Activated CD4-positive, alpha-beta T cell treated with anti-CD3 and anti-CD28 coated beads for 36 hours (primary cell): ENCODE measurements at regions of chr9 and their contacts with region 1.

Region 1: DNA sequence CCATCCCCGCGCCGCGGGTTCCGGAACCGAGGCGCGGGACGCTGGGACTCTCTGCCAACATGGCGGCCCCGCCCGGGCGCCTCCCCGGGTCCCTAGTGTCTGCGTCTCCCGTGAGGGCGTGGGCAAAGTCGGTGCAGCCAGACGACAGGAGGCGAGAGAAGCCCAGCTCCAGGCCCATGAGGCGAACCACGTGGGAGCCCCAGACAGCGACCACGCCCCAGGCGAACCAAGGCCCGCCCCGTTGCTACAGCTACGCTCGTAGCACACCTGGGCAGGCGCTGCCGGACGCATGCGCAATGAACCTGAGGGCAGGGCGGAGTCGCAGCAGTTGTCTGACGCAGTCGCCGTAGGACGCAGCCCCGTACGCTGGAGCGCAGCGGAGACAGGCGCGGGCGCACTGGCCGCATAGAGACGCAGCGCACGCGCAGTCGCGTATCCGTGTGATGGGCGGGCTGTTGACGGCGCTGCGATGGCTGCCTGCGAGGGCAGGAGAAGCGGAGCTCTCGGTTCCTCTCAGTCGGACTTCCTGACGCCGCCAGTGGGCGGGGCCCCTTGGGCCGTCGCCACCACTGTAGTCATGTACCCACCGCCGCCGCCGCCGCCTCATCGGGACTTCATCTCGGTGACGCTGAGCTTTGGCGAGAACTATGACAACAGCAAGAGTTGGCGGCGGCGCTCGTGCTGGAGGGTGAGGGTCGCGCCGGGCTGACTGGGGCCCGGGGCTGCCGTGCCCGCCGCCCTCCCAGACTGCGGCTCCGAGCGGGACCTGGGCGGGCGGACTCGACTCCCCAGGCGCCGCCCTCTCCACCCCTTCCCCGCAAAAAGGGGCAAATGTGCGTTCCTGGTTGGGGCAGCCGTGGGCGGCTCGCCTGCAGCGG is at the start of gene MAN1B1:
- DNase-seq: peak; percentile 100
- ATAC-seq: peak; percentile 85
- H3K4me3 Mint-ChIP-seq: peak within 1 kb of the TSS; percentile 88
- H3K27ac Mint-ChIP-seq: peak within 1 kb of the TSS; percentile 96
- H3K4me1 Mint-ChIP-seq: peaks cover 46% of the 10 kb centered on the region
- H3K27me3 Mint-ChIP-seq: no peaks in the 10 kb centered on the region
- total RNA-seq, gene MAN1B1: 21.6 to 26.7 TPM

Region 2: DNA sequence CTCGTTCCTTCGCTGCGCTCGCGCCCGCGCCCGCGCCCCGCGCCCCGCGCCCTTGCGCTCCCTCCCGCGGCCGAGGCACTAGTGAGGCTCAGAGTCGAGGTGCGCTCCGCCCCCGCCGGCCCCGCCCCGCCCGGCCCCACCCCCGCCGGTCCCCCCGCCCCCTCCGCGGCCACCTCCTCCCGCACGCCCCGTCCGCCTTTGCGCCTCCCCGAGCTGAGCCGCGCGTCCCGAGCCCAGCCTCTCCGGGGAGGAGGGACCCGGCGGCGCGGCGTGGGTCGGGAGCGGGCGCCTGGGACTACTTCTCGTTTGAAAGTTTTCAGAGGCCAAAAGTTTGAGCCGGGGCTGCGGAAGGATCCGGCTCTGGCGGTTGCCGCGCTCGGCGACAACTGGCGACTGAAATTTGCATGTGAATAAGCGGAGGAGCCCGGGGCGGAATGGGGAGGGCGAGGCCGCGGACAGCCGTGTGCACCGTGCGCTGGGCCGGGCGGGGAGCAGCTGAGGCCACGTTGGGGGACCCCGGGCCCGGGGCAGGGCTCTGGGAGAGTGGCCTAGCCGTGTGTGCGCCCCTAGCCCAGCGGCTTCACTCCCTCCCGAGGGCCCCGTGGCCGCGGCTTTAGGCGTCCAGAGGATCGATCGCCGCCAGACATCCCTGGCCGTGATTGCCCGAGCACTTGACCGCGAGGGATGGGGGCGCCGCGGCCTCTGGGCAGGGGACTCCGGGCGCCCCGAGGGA is 540.6 kb before region 1 on chr9 and contains the start of gene NOTCH1:
- CTCF ChIA-PET with region 1: no interaction called
- POLR2A ChIA-PET with region 1: no interaction called
- intact Hi-C with region 1: loop called in 1 of 2 experiments (anchors 2 kb)
- DNase-seq: peak; percentile 95
- ATAC-seq: peak; percentile 75
- H3K4me3 Mint-ChIP-seq: peak within 1 kb of the TSS; percentile 92
- H3K27ac Mint-ChIP-seq: peak within 1 kb of the TSS; percentile 88
- H3K4me1 Mint-ChIP-seq: peaks cover 34% of the 10 kb centered on the region
- H3K27me3 Mint-ChIP-seq: no peaks in the 10 kb centered on the region
- total RNA-seq, gene NOTCH1: 70.0 to 79.4 TPM

Region 3: DNA sequence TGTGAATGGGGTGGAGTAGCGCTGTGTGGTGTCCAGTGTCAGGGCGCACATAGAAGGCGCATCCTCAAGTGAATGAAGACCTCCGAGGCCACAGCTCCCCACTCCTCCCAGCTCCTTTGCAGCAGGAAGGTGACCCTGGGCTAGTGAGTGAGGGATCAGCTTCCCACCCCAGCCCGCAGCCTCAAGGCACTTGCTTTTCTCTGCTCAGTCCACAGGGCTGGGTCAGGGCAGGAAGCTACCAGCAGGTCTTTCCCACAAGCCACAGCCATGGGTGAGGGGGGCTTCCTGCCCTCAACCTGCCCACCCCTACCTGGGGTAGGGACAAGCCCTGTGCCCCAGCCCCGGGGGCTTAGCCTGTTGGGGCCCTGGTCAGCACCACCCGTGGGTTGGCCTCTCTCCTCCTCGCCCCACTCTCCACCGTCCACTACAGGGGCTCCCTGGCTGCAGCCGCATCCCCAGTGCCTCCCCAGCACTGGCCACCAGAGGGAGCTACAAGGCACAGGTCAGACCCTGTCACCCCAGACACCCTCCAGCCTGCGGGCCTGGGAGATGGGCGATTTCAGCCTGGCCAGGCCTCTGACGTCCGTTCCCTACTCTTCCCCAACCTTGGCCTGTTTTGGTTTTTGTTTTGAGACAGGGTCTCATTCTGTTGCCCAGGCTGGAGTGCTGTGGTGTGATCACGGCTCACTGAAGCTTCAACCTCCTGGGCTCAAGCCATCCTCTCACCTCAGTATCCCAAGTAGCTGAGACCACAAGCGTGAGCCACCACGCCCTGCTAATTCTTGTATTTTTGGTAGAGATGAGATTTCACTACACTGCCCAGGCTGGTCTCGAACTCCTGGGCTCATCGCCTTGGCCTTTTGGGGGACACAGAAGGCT is 57.5 kb before region 1 on chr9:
- CTCF ChIA-PET with region 1: interaction called, 26 read pairs
- POLR2A ChIA-PET with region 1: no interaction called
- intact Hi-C with region 1: loop called in 1 of 2 experiments (anchors 1 kb)
- DNase-seq: peak; percentile 88
- ATAC-seq: peak; percentile 52
- H3K4me3 Mint-ChIP-seq: peak overlapping the region; percentile 60
- H3K27ac Mint-ChIP-seq: peak overlapping the region; percentile 42
- H3K4me1 Mint-ChIP-seq: peaks cover 46% of the 10 kb centered on the region
- H3K27me3 Mint-ChIP-seq: no peaks in the 10 kb centered on the region

Region 4: DNA sequence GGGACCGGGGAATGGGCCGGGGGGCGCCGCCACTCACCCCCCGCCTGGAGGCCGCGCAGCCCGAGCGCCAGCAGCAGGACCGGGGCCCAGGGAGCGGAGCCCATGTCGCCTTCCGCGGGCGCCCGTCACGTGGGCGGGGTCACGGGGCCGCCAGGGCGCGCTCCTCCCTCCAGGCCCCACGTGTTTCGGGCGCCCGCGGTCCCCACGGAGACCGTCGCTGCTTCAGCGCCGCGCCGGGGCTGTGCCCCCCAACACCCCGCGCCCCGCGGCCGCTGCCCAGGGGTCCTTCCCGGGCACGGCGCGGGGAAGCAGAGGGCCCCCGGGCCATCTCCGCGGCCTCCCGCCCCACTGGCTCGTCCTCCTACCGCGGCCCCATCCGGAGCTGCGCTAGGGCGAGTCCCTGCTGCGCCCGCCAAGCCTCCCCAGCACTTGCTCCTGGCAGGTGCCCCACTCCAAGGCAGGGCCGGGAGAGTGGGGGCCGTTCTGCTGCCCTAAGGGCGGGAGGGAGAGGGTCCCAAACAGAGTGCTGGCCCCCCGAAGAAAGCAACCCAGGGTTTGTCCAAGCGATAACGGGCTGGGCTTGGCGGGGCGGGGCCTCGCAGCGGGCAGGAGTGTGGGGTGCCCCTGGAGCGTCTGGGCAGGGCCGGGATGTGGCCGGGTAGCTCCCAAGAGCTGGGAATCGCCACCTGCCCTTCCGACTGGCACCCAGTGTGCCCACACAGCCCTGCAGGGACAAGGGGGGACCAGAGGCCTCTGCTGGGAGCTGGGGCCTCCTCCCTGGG is 28.0 kb after region 1 on chr9 and contains the start of gene DPP7:
- CTCF ChIA-PET with region 1: no interaction called
- POLR2A ChIA-PET with region 1: no interaction called
- intact Hi-C with region 1: loop called in 1 of 2 experiments (anchors 1 kb)
- DNase-seq: peak; percentile 89
- ATAC-seq: peak; percentile 90
- H3K4me3 Mint-ChIP-seq: peak within 1 kb of the TSS; percentile 72
- H3K27ac Mint-ChIP-seq: peak within 1 kb of the TSS; percentile 51
- H3K4me1 Mint-ChIP-seq: peaks cover 13% of the 10 kb centered on the region
- H3K27me3 Mint-ChIP-seq: no peaks in the 10 kb centered on the region
- total RNA-seq, gene DPP7: 188 to 204 TPM

Region 5: DNA sequence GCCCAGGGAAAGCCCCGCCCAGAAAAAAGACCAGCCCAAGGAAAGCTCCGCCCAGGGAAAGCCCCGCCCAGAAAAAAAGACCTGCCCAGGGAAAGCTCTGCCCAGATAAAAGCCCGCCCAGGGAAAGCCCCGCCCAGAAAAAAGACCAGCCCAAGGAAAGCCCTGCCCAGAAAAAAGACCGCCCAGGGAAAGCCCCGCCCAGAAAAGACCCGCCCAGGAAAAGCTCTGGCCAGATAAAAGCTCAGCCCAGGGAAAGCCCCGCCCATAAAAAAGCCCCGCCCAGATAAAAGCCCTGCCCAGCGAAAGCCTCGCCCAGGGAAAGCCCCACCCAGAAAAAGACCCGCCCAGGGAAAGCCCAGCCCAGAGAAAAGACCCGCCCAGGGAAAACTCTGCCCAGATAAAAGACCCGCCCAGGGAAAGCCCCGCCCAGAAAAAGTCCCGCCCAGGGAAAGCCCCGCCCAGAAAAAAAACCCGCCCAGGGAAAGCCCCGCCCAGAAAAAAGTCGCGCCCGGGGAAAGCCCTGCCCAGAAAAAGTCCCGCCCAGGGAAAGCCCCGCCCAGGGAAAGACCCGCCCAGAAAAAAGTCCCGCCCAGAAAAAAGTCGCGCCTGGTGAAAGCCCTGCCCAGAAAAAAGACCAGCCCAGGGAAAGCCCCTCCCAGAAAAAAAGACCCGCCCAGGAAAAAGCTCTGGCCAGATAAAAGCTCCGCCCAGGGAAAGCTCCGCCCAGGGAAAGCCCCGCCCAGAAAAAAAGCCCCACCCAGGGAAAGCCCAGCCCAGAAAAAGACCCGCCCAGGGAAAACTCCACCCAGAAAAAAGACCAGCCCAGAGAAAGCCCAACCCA is 64.1 kb after region 1 on chr9:
- CTCF ChIA-PET with region 1: no interaction called
- POLR2A ChIA-PET with region 1: no interaction called
- intact Hi-C with region 1: loop called in 1 of 2 experiments (anchors 1 kb)
- DNase-seq: peak; percentile 90
- ATAC-seq: peak; percentile 80
- H3K4me3 Mint-ChIP-seq: no peak overlapping the region
- H3K27ac Mint-ChIP-seq: no peak overlapping the region
- H3K4me1 Mint-ChIP-seq: peaks cover 8% of the 10 kb centered on the region
- H3K27me3 Mint-ChIP-seq: peaks cover 8% of the 10 kb centered on the region

Region 6: DNA sequence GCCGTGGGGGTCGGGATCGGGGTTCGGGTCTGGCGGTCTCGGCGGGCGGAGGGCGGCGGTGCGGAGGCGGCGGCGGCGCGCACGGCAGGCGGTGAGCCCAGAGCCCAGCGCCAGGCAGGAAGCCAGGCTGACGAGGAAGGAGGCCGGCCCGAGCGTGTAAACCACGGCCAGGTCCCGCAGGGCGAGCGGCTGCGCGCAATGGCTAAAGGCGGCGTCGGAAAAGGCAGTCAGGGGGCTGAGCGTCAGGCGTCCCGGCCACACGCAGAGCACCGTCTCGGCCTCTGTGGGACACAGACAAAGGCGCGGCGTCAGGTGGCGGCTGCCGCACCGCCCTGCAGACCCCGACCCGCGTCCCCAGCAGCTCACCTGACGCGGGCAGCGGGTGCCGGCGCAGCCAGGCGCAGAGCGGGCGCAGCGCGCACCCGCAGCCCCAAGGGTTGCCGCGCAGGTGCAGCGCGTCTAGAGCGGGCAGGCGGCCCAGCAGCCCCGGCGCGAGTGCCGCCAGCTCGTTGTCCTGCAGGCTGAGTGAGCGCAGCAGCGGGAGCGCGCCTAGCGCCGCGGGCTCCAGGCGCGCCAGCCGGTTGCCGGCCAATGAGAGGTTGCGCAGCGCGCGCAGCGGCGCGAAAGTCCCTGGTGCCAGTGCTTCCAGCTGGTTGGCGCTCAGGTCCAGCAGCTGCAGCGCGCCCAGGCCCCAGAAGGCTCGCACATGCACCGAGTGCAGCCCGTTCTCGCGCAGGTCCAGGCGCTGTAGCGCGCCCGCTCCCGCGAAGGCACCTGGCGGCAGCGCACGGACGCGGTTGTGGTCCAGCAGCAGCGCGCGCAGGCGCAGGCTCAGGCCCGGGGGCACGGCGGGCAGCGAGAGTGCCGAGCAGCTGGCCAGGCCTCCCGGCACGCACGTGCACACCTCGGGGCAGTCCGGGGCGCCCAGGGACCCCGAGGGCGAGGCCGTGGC is 82.4 kb after region 1 on chr9:
- CTCF ChIA-PET with region 1: no interaction called
- POLR2A ChIA-PET with region 1: no interaction called
- intact Hi-C with region 1: no loop called
- DNase-seq: peak; percentile 39
- ATAC-seq: peak; percentile 42
- H3K4me3 Mint-ChIP-seq: peak overlapping the region; percentile 44
- H3K27ac Mint-ChIP-seq: no peak overlapping the region
- H3K4me1 Mint-ChIP-seq: no peaks in the 10 kb centered on the region
- H3K27me3 Mint-ChIP-seq: peaks cover 26% of the 10 kb centered on the region

Region 7: GRCh38 chr9:137200311-137201204 is 113.8 kb after region 1 on chr9 and contains the start of gene TPRN:
- CTCF ChIA-PET with region 1: interaction called, 3 read pairs
- POLR2A ChIA-PET with region 1: interaction called, 3 read pairs
- intact Hi-C with region 1: loop called (anchors 1 kb)
- DNase-seq: peak; percentile 99
- ATAC-seq: peak; percentile 99
- H3K4me3 Mint-ChIP-seq: peak within 1 kb of the TSS; percentile 79
- H3K27ac Mint-ChIP-seq: peak within 1 kb of the TSS; percentile 76
- H3K4me1 Mint-ChIP-seq: peaks cover 29% of the 10 kb centered on the region
- H3K27me3 Mint-ChIP-seq: no peaks in the 10 kb centered on the region
- total RNA-seq, gene TPRN: 5.6 to 5.8 TPM